PC-3 (cell line): ENCODE measurements at regions of chr22 and their contacts with region 1.

Region 1: DNA sequence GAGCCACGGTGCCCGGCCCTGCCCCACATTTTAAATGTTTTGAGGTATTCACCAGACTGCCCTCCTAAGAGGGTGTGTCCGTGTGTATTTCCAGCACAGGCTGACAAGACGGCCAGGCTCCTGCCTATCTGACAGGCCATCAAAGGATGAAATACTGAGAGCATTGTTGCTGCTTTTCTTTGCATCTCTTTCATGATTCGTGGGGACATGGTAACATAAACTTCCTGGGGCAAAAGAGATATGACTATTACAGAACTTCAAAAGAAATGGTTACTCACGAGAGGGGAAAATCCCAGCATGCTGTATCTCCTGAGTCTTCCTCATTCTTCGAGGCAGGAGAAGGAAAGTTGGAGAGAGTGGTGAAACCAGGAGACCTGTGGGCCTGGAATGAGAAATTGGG is 10.3 kb upstream of the BIK start:
- DNase-seq: no peak
- ATAC-seq: no peak
- H3K4me3 ChIP-seq: no peak overlapping the region
- H3K27ac ChIP-seq: no peak overlapping the region
- H3K4me1 ChIP-seq: no peaks in the 10 kb centered on the region
- H3K27me3 ChIP-seq: no peaks in the 10 kb centered on the region
- CTCF ChIP-seq: no peak

Region 2: DNA sequence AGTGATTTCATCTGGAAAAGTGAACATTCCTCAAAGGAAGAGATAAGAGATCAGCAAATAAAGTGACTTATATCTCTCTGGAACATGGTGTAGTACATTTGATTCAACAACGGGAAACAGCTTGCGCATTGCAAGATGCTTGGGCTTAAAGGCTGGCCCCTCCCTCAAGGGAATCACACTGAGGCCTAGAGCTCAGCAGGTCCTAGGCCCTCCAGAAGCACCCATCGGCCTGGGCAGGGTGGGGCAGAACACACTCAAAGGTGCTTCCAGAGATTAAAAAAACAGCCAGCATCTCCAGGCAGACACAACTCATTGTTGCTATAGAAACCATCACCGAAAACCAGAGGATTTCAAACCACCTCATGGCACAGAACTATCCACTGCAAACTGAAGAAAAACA is 174.1 kb before region 1 on chr22:
- CTCF ChIA-PET with region 1: interaction called, 16 read pairs
- POLR2A ChIA-PET with region 1: no interaction called
- intact Hi-C with region 1: no loop called
- DNase-seq: peak; percentile 24
- ATAC-seq: peak; percentile 20; the same call in 1 of the 2 replicates
- H3K4me3 ChIP-seq: no peak overlapping the region
- H3K27ac ChIP-seq: no peak overlapping the region
- H3K4me1 ChIP-seq: peaks cover 35% of the 10 kb centered on the region
- H3K27me3 ChIP-seq: no peaks in the 10 kb centered on the region
- CTCF ChIP-seq: no peak

Region 3: DNA sequence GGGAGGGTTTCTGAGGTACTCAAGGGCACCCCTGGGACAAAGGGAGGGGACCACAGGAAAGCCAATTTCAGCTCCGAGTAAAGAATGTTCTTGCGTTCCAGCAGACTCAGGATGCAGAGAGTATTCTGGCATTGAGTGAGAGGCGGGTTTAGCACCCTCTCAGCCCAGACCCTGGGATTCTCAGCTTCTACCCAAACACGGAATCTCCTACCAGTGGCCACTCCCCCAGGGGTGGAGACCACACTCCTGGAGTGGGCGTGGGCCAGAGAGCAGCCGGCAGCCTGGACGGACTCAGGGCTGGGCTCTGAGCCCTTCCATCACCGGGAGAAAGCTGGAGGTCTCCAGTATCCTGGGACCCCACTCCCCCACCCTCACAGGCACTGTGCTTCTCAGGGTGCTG is 112.8 kb after region 1 on chr22:
- CTCF ChIA-PET with region 1: no interaction called
- POLR2A ChIA-PET with region 1: no interaction called
- intact Hi-C with region 1: no loop called
- DNase-seq: no peak
- ATAC-seq: no peak
- H3K4me3 ChIP-seq: no peak overlapping the region
- H3K27ac ChIP-seq: no peak overlapping the region
- H3K4me1 ChIP-seq: no peaks in the 10 kb centered on the region
- H3K27me3 ChIP-seq: no peaks in the 10 kb centered on the region
- CTCF ChIP-seq: no peak

Region 4: GRCh38 chr22:43446916-43447315 is 346.7 kb after region 1 on chr22:
- CTCF ChIA-PET with region 1: no interaction called
- POLR2A ChIA-PET with region 1: no interaction called
- intact Hi-C with region 1: no loop called
- DNase-seq: peak; percentile 26
- ATAC-seq: peak; percentile 42
- H3K4me3 ChIP-seq: no peak overlapping the region
- H3K27ac ChIP-seq: no peak overlapping the region
- H3K4me1 ChIP-seq: no peaks in the 10 kb centered on the region
- H3K27me3 ChIP-seq: no peaks in the 10 kb centered on the region
- CTCF ChIP-seq: no peak

Region 5: DNA sequence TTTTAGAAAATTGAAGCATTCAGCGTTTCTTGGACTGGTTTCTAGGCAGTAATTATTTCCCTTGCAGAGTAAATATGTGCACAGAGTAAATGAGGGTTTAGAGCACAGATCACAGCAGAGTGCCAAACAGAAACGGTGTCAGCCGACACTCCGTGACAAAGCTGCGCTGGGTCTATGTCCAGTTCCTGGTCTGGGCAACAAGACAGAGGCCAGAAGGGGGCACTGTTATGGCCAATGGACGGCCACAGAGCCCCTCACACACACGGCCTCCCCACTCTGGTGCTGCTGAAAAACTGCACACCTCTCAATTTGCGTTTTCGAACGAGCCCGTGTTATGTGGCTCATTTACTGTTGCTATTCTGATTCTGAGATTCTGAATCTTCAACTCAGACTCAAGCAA is 492.3 kb after region 1 on chr22:
- CTCF ChIA-PET with region 1: no interaction called
- POLR2A ChIA-PET with region 1: no interaction called
- intact Hi-C with region 1: no loop called
- DNase-seq: no peak
- ATAC-seq: no peak
- H3K4me3 ChIP-seq: no peak overlapping the region
- H3K27ac ChIP-seq: no peak overlapping the region
- H3K4me1 ChIP-seq: no peaks in the 10 kb centered on the region
- H3K27me3 ChIP-seq: peaks cover 5% of the 10 kb centered on the region; the same call in 1 of the 2 replicates
- CTCF ChIP-seq: peak; percentile 33